Activated T-helper 2 cell treated with anti-CD3 and anti-CD28 coated beads, Interferon-gamma antibody, Interleukin-2, Interleukin-4, amounts not matched to agents 10 μg/mL and 5 μg/mL and 100 μg/mL, durations not matched to agents 14 hours and 24 hours and 36 hours (primary cell): ENCODE measurements at regions of chr11 and their contacts with region 1.

Region 1: GRCh38 chr11:74492974-74493790 is at the start of gene LIPT2:
- DNase-seq: peak; percentile 95
- H3K4me3 Mint-ChIP-seq: peak within 1 kb of the TSS; percentile 85
- H3K27ac Mint-ChIP-seq: peak within 1 kb of the TSS; percentile 78
- H3K4me1 Mint-ChIP-seq: peaks cover 16% of the 10 kb centered on the region
- H3K27me3 Mint-ChIP-seq: peaks cover 14% of the 10 kb centered on the region
- total RNA-seq, gene LIPT2: 5.3 and 5.7 TPM in 2 replicates

Region 2: DNA sequence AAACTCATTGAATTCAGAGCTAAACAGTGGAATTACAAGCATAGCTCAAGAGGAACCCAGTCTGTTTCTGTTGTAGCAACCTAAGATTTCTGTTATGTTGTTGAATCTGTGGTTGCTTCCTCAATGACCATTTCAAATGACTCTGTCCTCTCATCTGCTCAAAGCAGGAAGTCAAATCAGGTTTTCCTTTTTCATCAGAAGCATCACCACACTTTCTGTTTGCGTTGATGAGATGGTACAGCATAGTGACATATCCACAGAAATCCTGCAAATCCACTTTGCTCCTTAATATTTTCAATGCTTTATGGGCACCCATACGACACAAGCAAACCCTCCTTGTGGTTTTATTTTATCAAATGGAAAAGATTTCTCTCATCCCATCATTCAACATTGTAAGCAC is 497.9 kb before region 1 on chr11:
- intact Hi-C with region 1: no loop called
- DNase-seq: no peak
- H3K4me3 Mint-ChIP-seq: peak overlapping the region; percentile 37
- H3K27ac Mint-ChIP-seq: peak overlapping the region; percentile 96
- H3K4me1 Mint-ChIP-seq: peaks cover 45% of the 10 kb centered on the region
- H3K27me3 Mint-ChIP-seq: no peaks in the 10 kb centered on the region

Region 3: GRCh38 chr11:74592441-74593362 is 99.5 kb after region 1 on chr11 and contains the start of gene POLD3:
- intact Hi-C with region 1: loop called (anchors 1 kb)
- DNase-seq: peak; percentile 91
- H3K4me3 Mint-ChIP-seq: peak within 1 kb of the TSS; percentile 95
- H3K27ac Mint-ChIP-seq: peak within 1 kb of the TSS; percentile 93
- H3K4me1 Mint-ChIP-seq: peaks cover 15% of the 10 kb centered on the region
- H3K27me3 Mint-ChIP-seq: peaks cover 5% of the 10 kb centered on the region
- total RNA-seq, gene POLD3: 44.5 and 45.6 TPM in 2 replicates

Region 4: DNA sequence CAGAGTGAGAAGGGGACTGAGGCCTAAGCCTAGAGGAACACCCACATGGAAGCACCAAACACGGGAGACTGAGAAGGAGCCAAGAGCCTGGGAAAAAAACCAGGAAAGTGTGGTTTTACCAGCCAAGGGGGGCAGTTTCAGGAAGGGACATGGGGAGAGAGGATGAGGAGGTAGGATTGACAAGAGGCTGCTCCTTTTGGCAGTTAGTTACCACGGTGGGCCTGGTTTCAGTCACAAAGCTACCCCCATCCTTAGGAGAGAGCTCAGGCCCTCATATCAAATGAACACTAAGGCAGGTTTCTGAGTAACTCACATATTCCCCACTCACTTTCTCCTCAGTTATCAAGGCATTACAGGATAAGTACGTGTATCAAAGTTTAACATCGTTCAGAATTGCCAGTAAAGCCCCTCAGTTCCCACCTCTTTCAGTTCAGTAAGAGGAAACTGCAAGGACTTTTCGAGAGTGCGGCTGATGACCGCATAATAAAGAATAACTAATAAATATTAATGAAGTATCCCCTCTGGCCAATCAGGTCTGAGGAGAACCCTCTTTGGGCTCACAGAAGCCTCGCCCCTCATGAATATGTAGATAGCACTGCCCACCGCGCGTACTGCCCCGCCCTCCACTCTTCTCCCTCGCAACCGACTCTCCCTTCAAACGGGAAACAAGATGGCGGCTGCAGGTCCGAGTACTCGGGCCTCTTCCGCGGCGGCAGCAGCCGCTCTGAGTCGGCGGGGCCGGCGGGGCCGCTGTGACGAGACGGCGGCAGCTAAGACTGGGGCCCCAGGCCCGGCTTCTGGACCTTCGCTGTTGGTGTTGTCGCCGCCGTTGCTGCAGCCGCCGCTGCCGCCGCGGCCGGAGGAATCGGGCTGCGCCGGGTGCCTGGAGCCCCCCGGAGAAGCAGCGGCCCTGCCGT is 255.3 kb after region 1 on chr11 and contains the start of gene RNF169:
- intact Hi-C with region 1: loop called (anchors 2 kb)
- DNase-seq: peak; percentile 85
- H3K4me3 Mint-ChIP-seq: peak within 1 kb of the TSS; percentile 88
- H3K27ac Mint-ChIP-seq: peak within 1 kb of the TSS; percentile 82
- H3K4me1 Mint-ChIP-seq: peaks cover 23% of the 10 kb centered on the region
- H3K27me3 Mint-ChIP-seq: no peaks in the 10 kb centered on the region
- total RNA-seq, gene RNF169: 14.3 and 14.4 TPM in 2 replicates